GM10248 (cell line): ENCODE measurements at regions of chr4 and their contacts with region 1.

Region 1: DNA sequence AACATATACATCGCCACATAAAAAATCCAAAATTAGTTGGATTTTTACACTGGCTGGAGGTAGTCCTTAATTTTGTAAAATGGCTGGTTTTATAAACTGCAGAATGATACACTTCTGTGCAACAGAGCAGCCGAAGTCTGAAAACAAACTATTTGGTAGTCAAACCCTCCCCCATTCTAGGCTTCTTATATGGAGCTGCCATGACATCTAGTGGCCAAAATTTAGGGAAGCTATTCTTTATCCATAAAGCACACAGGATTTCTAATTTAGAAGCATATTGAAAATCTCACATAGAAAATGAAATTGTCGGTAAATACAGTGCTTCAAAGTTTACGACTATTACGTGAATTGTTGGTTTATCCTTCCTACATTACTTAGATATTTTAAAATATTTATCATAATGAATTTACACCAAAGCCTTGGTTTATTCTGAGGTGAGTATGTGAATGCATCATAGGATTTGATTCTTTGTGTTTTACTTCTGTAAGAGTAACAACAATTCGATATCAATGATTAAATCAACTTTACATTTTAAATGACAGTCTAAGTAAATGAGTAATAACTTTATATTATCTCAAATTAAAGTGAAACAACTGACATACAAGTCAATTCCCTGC is 113.4 kb upstream of the FAM241A start:
- DNase-seq: peak; percentile 50
- CTCF ChIP-seq: peak; percentile 56

Region 2: DNA sequence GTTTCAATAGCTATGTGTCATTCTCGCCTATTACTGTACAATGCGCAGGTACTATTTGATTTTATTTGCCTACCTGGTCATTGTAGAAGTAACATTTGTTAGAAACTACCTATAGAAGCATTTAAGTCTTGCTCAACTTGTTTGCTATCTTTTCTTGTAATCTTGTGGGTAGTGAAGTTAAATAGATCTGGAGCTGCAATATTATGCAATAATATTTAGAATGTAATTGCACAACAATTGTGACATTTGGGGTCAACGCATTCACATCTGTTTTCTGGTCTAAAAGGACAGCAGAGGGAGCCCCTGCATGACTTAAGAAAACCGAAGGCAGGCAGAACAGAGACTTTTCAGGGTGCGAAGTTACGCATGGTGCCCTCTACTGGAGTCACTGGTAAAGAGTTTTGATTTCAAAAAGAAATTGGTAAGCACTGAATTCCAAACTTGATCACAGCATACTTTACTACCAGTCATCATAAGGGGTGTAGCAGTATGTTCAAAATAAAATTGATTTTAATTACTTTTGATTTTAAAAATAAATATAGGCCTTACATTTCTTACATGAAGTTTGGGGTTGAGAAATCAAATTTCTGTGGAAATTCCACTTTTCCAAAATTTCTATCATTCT is 389.8 kb before region 1 on chr4:
- CTCF ChIA-PET with region 1: interaction called, 15 read pairs
- POLR2A ChIA-PET with region 1: no interaction called
- DNase-seq: peak; percentile 53
- CTCF ChIP-seq: peak; percentile 75

Region 3: DNA sequence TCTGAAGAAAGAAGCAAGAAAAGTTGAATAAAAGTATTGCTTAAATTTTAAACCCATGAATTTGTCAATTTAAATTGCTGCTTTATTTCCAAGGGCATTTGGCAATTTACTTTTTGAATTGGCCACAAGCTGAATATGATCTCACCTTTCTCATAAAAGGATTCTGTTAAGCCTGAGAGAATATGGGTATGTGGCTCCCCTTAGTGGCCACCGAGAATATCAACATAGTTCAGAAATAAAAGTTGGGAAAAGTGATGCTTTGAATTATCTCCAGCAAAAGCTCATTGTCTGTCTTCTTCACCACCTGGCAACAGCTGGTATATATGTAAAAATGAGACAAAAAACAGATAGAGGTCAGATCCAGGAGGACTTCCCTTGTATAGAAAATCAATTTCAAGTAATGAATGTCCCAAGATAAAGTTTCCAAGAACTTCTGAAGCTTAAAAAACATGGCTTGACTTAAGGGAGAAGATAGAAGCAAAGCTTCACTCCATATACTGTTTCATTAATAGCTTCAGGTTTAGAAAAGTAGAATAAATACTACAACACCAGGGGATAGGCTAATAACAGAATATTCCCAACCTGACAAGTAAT is 177.2 kb before region 1 on chr4:
- CTCF ChIA-PET with region 1: interaction called, 13 read pairs
- POLR2A ChIA-PET with region 1: no interaction called
- DNase-seq: peak; percentile 7
- CTCF ChIP-seq: peak; percentile 63

Region 4: GRCh38 chr4:111943795-111944203 is 88.0 kb before region 1 on chr4:
- CTCF ChIA-PET with region 1: interaction called, 49 read pairs
- POLR2A ChIA-PET with region 1: no interaction called
- DNase-seq: peak; percentile 57
- CTCF ChIP-seq: peak; percentile 57

Region 5: GRCh38 chr4:111960241-111960667 is 71.6 kb before region 1 on chr4:
- CTCF ChIA-PET with region 1: interaction called, 12 read pairs
- POLR2A ChIA-PET with region 1: no interaction called
- DNase-seq: peak; percentile 32
- CTCF ChIP-seq: no peak

Region 6: DNA sequence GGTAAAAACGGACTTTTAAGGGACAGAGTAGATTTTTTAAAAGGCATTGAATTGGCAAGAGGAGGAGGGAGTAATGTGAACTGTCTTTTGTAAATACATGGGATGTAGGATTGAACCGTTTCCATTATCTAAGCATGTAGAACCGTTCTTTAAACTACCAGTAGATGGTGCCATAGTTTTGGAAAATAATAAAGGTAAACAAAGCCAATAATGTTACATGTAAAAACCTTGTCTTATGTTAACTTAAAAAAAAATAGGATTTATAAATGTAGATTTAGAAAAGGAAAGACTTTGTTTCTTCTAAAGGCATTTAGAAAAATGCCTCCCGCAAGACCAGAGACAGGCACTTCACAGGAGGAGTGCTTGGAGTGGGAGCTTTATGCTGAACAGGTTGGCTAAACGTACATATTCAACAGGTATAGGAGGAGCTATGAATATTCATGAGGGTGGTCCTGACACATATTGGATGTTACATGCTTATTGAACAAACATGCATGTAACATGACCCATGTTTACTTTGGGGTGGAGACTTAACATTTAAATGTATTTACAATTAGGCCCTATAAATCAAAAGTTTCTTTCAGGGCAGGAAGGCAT is 68.0 kb after region 1 on chr4:
- CTCF ChIA-PET with region 1: no interaction called
- POLR2A ChIA-PET with region 1: no interaction called
- DNase-seq: peak; percentile 51
- CTCF ChIP-seq: peak; percentile 64

Region 7: DNA sequence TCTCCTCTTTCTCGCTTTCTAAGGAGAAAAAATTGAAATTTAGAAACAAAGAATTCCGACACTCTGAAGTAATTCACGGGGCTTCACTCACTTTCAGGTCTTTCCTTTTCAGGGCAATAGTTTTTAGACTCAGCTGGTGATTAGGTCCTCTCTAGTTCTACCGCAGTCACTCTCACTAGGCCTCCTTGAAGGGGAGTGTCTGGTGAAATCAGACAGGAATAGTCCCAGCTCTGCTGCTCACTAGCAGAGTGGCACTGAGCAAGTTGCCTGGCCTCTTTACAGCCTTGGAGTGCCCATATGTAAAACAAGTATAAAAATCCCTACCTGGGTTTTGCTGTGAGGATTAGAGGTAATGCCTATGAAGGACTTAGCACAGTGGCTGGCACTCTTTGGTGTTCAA is 420.0 kb after region 1 on chr4:
- CTCF ChIA-PET with region 1: no interaction called
- POLR2A ChIA-PET with region 1: no interaction called
- DNase-seq: no peak
- CTCF ChIP-seq: no peak